Activated CD8-positive, alpha-beta T cell treated with anti-CD3 and anti-CD28 coated beads for 36 hours (primary cell): ENCODE measurements at regions of chr14 and their contacts with region 1.

Region 1: DNA sequence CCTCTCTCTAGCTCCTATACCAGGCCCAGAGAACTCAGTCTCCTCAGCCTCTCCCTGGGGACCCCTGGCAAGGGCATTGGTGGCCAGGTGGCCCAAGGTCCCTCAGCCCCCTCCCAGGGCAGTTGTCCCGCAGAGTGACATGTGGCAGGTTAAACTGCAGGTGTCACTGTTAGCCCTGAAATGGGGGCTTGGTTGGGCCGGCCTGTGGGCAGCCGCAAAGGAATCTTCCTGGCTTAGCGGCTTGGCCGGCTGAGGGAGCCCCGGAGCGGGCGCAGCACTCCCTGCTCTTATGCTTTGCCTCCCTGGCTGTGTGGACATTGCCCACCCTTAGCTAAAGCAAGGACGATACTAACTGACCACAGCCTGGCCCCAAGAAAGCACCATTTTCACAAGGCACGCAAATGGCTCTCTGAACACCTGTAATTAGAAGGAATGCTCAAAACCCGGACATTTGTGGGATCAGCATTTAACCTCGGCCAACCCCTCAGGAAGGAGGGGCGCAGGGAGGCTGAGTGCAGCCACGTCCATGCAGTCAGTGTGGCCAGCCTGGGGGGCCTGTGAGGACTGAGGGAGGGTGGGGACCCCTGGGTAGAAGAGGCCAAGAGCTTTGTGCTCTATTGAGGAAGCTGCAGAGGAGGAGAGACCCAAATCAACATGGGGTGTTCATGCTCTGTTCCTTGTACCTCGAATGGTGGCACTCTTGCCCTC is 82.2 kb downstream of the PAPOLA start:
- DNase-seq: peak; percentile 50
- ATAC-seq: peak; percentile 88
- H3K4me3 Mint-ChIP-seq: no peak overlapping the region
- H3K27ac Mint-ChIP-seq: no peak overlapping the region
- H3K4me1 Mint-ChIP-seq: peaks cover 16% of the 10 kb centered on the region
- H3K27me3 Mint-ChIP-seq: peaks cover 15% of the 10 kb centered on the region
- CTCF ChIP-seq: peak; percentile 58

Region 2: DNA sequence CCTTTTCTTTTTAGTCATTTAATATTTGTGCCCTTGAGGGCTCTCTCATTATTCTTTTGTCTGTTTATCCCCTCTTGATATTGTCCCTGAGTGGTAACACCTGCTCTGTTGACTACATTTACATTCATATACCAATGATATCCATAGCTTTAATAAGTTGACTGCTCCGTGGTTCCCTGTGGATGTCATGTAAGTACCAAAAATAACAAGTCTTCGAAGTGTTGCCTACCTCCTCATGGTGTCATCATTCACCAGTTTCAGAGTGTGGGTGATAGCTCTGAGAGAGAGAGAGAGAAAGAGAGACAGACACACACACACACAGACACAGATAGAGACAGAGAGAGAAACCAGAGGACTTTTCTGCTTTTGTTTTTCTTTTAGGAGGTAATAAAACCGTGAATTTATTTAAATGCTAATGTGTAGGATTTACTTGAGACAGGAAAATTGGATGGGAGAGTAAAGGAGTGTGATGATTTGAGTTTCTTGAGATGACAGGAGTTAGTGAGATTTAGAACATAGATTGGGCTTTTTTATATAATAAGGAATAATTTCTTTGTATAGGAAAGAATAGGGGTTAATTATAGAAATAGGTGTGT is 29.9 kb before region 1 on chr14:
- CTCF ChIA-PET with region 1: no interaction called
- POLR2A ChIA-PET with region 1: no interaction called
- intact Hi-C with region 1: no loop called
- DNase-seq: no peak
- ATAC-seq: peak; percentile 74
- H3K4me3 Mint-ChIP-seq: no peak overlapping the region
- H3K27ac Mint-ChIP-seq: peak overlapping the region; percentile 75
- H3K4me1 Mint-ChIP-seq: peaks cover 12% of the 10 kb centered on the region
- H3K27me3 Mint-ChIP-seq: no peaks in the 10 kb centered on the region
- CTCF ChIP-seq: no peak

Region 3: DNA sequence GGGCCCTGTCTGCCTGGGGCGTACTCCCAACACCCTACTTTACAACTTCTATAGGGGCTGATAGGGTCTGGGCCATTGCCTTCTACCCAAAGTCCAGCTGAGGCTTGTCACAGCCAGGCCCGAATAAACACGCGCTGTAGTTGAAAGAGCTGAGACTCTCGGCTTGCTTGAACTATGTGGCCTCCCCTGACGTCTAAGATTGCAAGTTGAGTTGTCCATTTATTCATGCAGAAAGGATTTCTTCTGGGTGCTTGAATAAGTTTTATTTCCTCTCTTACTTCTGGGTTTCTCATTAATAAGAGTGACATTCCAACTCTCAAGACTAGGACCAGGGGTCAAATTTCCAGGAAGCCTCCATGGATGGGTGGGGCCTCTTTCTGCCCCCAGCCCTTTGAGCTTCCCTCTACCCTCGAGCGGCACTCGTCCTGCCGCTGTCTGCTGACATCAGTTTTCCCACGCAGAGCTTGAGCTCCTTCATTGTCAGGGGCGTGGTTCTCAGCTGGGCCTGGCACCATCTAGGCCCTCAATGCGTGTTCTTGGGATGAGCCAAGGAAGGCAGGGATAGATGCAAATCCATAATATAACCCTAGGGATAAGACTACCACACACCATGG is 138.5 kb after region 1 on chr14:
- CTCF ChIA-PET with region 1: no interaction called
- POLR2A ChIA-PET with region 1: no interaction called
- intact Hi-C with region 1: loop called (anchors 10 kb)
- DNase-seq: no peak
- ATAC-seq: no peak
- H3K4me3 Mint-ChIP-seq: no peak overlapping the region
- H3K27ac Mint-ChIP-seq: no peak overlapping the region
- H3K4me1 Mint-ChIP-seq: no peaks in the 10 kb centered on the region
- H3K27me3 Mint-ChIP-seq: peaks cover 9% of the 10 kb centered on the region
- CTCF ChIP-seq: no peak